ENCODE measurements at regions of chr7 and their contacts with region 1.

Region 1: GRCh38 chr7:67377939-67378862 is 381.6 kb downstream of the TYW1 start:
- DNase-seq: peak; percentile 61
- ATAC-seq: peak; percentile 99
- H3K4me3 ChIP-seq: no peak overlapping the region
- H3K27ac ChIP-seq: no peak overlapping the region
- H3K4me1 ChIP-seq: no peaks in the 10 kb centered on the region
- H3K27me3 ChIP-seq: no peaks in the 10 kb centered on the region
- CTCF ChIP-seq: peak; percentile 89
- EP300 ChIP-seq: no peak
- POLR2A ChIP-seq: no peak
- RAD21 ChIP-seq: peak; percentile 69

Region 2: DNA sequence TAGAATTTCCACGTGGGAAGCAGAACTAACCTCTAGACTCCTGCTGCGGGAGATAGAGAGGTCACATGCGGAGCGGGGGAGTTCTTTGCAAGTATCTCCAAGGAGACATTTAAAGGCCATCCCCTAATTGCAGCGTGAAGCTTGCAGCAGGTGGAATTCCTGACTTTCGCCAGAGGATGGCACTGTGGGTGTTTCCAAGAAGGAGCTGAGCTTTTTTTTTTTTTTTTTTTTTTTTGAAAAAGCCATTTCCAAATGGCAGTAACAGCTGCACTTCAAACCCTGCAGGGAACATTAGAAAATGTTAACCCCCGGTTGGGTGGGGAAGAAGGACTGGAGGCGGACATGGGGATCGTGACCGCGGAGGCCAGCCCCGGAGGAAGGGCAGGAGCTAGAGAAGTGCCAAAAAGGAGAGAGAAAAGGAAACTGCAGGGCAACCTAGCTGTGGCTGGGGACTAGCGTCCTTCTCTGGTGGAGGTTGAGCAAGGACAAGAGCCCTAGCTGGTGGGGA is 106.1 kb after region 1 on chr7:
- CTCF ChIA-PET with region 1: no interaction called
- POLR2A ChIA-PET with region 1: no interaction called
- in situ Hi-C with region 1: no loop called
- intact Hi-C with region 1: loop called (anchors 2 kb)
- DNase-seq: peak; percentile 63
- ATAC-seq: peak; percentile 83
- H3K4me3 ChIP-seq: peak overlapping the region in 1 of 3 experiments; percentile 12; a peak in 1 of 6 replicates
- H3K27ac ChIP-seq: no peak overlapping the region
- H3K4me1 ChIP-seq: no peaks in the 10 kb centered on the region
- H3K27me3 ChIP-seq: peaks cover 0 to 6% of the 10 kb centered on the region in 2 experiments; a peak in 1 of 5 replicates
- CTCF ChIP-seq: peak; percentile 71
- EP300 ChIP-seq: no peak
- POLR2A ChIP-seq: no peak
- RAD21 ChIP-seq: no peak

Region 3: GRCh38 chr7:67625257-67625737 is 247.1 kb after region 1 on chr7:
- CTCF ChIA-PET with region 1: no interaction called
- POLR2A ChIA-PET with region 1: no interaction called
- in situ Hi-C with region 1: no loop called
- intact Hi-C with region 1: loop called (anchors 2 kb)
- DNase-seq: peak; percentile 51
- ATAC-seq: peak; percentile 88
- H3K4me3 ChIP-seq: no peak overlapping the region
- H3K27ac ChIP-seq: no peak overlapping the region
- H3K4me1 ChIP-seq: no peaks in the 10 kb centered on the region
- H3K27me3 ChIP-seq: no peaks in the 10 kb centered on the region; a peak in 1 of 5 replicates
- CTCF ChIP-seq: peak; percentile 90
- EP300 ChIP-seq: no peak
- POLR2A ChIP-seq: no peak
- RAD21 ChIP-seq: peak; percentile 81